Cardiac septum (tissue), 1 donor: ENCODE measurements at regions of chr15 and their contacts with region 1.

Region 1: DNA sequence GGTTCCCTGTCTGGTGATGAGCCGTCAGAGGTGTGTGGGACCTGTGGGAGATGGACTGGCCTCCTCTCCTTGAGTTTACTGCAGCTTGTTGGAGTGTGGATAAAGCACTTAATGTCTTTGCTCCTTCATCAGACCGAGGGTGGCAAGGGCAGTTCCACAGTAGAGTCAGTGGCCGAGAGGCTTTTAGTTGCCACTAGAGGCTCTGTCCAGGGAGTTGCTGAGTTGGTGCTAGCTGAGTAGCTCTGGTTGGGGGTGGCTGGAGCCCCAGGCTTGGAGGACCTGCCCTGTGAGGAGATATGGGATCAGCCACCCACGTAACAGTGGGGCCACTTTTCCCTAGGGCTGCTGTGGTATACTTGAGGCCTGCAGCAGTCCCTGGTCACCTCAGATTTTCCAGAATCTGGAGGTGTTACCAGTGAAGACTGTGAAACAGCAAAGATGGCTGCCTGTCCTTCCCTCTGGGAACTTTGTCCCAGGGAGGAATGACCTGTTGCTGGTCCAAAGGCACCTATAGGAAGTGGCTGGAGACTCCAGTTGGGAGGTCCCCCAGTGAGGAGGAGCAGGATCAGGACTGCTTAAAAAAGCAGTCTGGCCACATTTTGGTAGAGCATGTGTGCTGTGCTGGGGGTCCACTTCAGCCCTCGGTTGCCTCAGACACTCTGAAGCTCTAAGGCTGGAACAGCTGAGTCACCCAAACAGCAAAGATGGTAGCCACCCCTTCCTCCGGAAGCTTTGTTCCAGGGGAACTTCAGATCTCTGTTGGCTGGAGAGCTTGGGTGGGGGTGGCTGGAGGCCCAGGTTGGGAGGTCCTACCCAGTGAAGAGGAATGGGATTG is 72.9 kb downstream of the AKAP13 start:
- DNase-seq: no peak

Region 2: GRCh38 chr15:85402195-85402881 is 50.9 kb before region 1 on chr15:
- intact Hi-C with region 1: loop called (anchors 5 kb)
- DNase-seq: no peak

Region 3: GRCh38 chr15:85440451-85440850 is 12.8 kb before region 1 on chr15:
- intact Hi-C with region 1: no loop called
- DNase-seq: no peak

Region 4: GRCh38 chr15:85563328-85563727 is 110.1 kb after region 1 on chr15:
- intact Hi-C with region 1: no loop called
- DNase-seq: no peak